Right ventricle myocardium inferior (tissue), 1 donor: ENCODE measurements at regions of chr20 and their contacts with region 1.

Region 1: GRCh38 chr20:25247956-25248785 is at the start of gene PYGB:
- DNase-seq: peak; percentile 91
- ATAC-seq: peak; percentile 91
- total RNA-seq, gene PYGB: 174 TPM

Region 2: DNA sequence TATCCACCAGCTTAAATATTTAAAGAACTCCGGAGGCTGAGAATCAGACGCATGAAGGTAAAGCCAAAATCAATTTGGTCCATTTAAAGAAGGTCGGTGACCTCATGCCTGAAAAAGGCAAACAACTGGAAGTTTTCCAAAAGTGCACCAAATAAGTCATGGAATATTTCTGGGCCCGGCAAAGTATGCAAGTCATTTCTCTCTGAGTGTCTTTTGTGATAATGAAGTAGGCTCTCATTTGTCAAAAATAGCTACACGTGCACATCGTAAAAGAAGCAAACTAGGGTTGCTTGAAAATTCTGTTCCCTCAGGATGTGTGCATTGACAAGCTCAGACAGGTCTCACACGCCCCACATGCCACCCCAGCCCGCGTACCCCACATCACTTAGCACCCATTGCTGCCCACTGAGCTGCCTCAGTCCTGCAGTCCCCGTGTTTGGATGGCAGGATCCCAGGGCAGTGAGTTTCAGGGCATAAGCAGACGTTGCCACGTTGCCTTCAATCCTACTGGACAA is 20.8 kb before region 1 on chr20:
- intact Hi-C with region 1: loop called (anchors 2 kb)
- DNase-seq: no peak
- ATAC-seq: peak; percentile 43